Mucosa of descending colon (tissue), 3 donors: ENCODE measurements at regions of chr5 and their contacts with region 1.

Region 1: DNA sequence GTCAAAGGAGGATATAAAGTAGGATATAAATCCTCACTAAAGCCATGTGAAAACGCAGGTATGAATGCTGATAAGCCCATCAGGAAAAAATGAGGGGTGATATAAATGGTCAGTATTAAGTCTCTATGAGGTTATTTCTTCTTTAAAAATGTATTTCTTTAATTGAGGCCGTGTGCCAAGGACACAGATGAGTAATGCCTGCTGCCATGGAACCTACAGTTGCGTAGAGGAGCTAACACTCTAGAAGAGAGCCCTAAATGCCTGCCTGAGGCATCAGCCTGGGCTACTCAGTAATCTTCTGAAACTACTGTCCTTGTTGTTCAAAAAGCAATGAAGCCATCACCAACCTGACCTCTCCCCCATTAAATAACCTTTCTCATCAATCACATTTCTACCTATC is 84.9 kb downstream of the KLHL3 start:
- DNase-seq: no peak
- ATAC-seq: no peak
- H3K4me3 ChIP-seq: no peak overlapping the region
- H3K4me1 ChIP-seq: no peaks in the 10 kb centered on the region
- CTCF ChIP-seq: no peak

Region 2: GRCh38 chr5:137735555-137736284 is 84.7 kb after region 1 on chr5 and contains the start of gene KLHL3:
- intact Hi-C with region 1: loop called in 1 of 2 experiments (anchors 10 kb)
- DNase-seq: peak; percentile 39 to 66 (median 63)
- ATAC-seq: peak; percentile 63
- H3K4me3 ChIP-seq: no peak within 1 kb of the TSS
- H3K4me1 ChIP-seq: peaks cover 8% of the 10 kb centered on the region
- CTCF ChIP-seq: no peak
- total RNA-seq, gene KLHL3: 4.2 to 6.7 (median 5.4) TPM